ENCODE measurements at regions of chr12 and their contacts with region 1.

Region 1: DNA sequence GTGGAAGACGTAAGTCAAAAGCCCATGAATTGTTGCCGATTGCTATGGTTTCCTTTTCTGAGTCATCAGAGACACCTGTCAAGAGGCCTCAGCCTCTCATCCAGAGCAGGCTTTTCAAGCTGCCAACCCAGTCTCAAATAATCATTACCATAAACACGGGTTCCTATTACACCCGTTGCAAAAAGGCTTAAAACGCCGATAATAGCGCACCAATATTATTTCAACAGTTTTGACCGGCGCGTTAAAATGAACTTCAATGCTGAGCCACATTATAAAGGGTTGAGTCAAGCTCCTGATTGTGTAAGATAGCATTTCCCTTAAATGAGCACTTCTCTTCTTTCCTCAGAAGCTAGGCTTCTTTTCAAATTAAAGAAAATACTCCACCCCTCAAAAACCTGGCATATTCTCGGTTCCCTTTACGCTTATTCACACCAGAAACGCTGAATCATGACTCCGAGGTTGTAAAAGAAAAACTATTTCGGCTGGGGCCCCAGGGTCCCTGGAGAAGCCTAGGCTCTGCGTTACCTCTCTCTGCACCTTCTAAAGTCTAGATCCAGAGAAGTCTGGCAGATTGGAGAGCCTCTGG is 1.4 kb downstream of the TMTC1 start:
- DNase-seq: no peak
- ATAC-seq: peak; percentile 39 to 49 (median 46)
- H3K4me3 ChIP-seq: peak overlapping the region; percentile 52 to 97 (median 84)
- H3K27ac ChIP-seq: peak overlapping the region; percentile 69 to 94 (median 89)
- H3K4me1 ChIP-seq: peaks cover 0 to 52% (median 12%) of the 10 kb centered on the region in 12 donors
- H3K27me3 ChIP-seq: peaks cover 0 to 12% (median 0%) of the 10 kb centered on the region in 9 donors
- CTCF ChIP-seq: no peak
- POLR2A ChIP-seq: no peak

Region 2: DNA sequence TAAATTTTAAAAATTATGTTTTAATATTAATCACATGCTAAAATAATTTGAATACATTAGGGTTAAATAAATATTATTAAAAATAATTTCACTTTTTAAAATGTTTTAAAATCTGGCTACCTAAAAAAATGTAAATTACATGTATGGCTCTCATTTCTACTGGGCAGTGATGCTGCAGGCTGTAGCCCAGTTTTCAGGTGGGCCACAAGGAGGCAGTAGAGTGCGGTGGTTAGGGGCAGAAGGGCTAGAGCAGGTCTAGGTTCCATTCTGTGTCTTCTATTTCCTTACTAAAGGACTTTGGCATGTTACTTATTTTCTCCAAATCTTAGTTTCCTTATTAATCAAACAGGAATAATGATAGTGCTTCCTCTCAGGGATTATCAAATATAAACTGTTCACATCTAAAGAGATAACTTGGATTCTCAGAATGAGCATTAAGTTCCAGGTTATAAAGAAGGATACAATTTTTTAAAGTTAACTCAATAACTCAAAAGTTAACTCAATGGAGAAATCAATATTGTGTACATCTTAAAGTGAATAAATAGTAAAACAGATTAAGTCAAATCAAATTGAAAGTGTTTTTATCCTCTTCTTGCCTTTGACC is 230.0 kb before region 1 on chr12:
- intact Hi-C with region 1: loop called in 8 of 10 experiments (anchors 5 to 10 kb)
- DNase-seq: peak; percentile 53 to 80 (median 75)
- ATAC-seq: peak; percentile 78 to 95 (median 92)
- H3K4me3 ChIP-seq: no peak overlapping the region
- H3K27ac ChIP-seq: peak overlapping the region in 6 of 12 donors; percentile 1 to 54 (median 22)
- H3K4me1 ChIP-seq: peaks cover 0 to 20% (median 8%) of the 10 kb centered on the region in 12 donors
- H3K27me3 ChIP-seq: no peaks in the 10 kb centered on the region
- CTCF ChIP-seq: peak; percentile 85 to 96 (median 91)
- POLR2A ChIP-seq: no peak

Region 3: DNA sequence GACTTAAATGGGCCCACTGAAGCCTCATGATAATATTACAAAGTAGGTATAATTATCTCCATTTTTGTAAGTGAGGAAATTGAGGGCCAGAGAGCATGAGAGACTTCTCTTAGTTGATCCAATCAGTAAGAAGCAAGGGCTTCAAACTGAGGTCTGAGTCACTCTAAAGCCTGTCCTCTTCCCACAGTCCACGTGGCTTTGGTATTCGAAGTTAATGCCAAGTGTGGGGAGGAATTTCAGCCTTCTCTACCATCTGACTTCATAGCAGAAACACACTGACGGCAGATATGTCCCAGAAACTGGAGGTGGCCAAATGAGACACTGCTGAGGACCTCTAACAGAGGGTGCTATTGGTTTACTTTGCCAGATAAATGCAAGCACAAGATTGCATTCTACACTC is 170.5 kb before region 1 on chr12:
- intact Hi-C with region 1: loop called in 1 of 10 experiments (anchors 5 kb)
- DNase-seq: no peak
- ATAC-seq: peak; percentile 41 to 80 (median 75)
- H3K4me3 ChIP-seq: no peak overlapping the region
- H3K27ac ChIP-seq: no peak overlapping the region
- H3K4me1 ChIP-seq: peaks cover 0 to 41% (median 19%) of the 10 kb centered on the region in 12 donors
- H3K27me3 ChIP-seq: no peaks in the 10 kb centered on the region
- CTCF ChIP-seq: peak in 2 of 12 donors; percentile 11 to 15
- POLR2A ChIP-seq: no peak

Region 4: DNA sequence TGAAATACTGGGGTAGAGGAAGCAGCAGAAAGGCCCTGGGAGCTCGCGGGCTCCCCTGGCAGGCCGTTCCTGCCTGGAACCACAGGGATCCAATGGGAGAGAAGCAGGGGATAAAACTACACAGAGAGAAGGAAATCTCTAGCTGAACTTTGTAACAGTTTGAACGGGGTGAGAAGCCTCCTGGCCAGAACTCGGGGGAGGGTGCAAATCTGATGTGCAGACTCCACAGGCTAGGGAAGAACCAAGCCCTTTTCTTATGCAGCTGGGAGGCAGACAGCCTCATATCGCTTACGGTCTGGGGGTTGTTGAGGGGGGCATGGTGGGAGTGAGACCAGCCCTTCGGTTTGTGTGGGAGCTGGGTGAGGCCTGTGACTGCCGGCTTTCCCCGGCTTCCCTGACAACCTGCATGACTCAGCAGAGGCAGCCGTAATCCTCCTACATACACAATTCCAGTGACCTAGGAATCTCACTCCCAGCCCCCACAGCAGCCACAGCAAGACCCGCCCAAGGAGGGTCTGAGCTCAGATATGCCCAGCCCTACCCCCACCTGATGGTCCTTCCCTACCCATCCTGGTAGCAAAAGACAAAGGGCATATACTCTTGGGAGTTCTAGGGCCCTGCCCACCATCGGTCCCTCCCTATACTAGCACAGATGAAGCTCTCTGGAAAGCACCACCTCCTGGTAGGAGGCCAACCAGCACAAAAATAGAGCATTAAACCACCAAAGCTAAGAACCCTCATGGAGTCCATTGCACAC is 141.6 kb before region 1 on chr12:
- intact Hi-C with region 1: loop called in 2 of 10 experiments (anchors 10 kb)
- DNase-seq: peak; percentile 45 to 67 (median 63)
- ATAC-seq: peak; percentile 23 to 69 (median 56)
- H3K4me3 ChIP-seq: peak overlapping the region in 3 of 12 donors; percentile 1 to 33 (median 6)
- H3K27ac ChIP-seq: peak overlapping the region in 11 of 12 donors; percentile 47 to 82 (median 69)
- H3K4me1 ChIP-seq: peaks cover 0 to 26% (median 13%) of the 10 kb centered on the region in 12 donors
- H3K27me3 ChIP-seq: no peaks in the 10 kb centered on the region
- CTCF ChIP-seq: peak in 3 of 12 donors; percentile 10 to 42 (median 19)
- POLR2A ChIP-seq: no peak

Region 5: GRCh38 chr12:29673346-29673745 is 109.0 kb before region 1 on chr12:
- intact Hi-C with region 1: loop called in 3 of 10 experiments (anchors 5 to 10 kb)
- DNase-seq: no peak
- ATAC-seq: no peak
- H3K4me3 ChIP-seq: no peak overlapping the region
- H3K27ac ChIP-seq: no peak overlapping the region
- H3K4me1 ChIP-seq: peaks cover 0 to 30% (median 5%) of the 10 kb centered on the region in 12 donors
- H3K27me3 ChIP-seq: no peaks in the 10 kb centered on the region
- CTCF ChIP-seq: no peak
- POLR2A ChIP-seq: no peak

Region 6: GRCh38 chr12:29741342-29742241 is 40.8 kb before region 1 on chr12:
- intact Hi-C with region 1: loop called in 1 of 10 experiments (anchors 5 kb)
- DNase-seq: no peak
- ATAC-seq: peak; percentile 49 to 84 (median 79)
- H3K4me3 ChIP-seq: peak overlapping the region in 1 of 12 donors; percentile 20
- H3K27ac ChIP-seq: peak overlapping the region; percentile 51 to 82 (median 70)
- H3K4me1 ChIP-seq: peaks cover 0 to 73% (median 44%) of the 10 kb centered on the region in 12 donors
- H3K27me3 ChIP-seq: no peaks in the 10 kb centered on the region
- CTCF ChIP-seq: no peak
- POLR2A ChIP-seq: peak in 1 of 2 donors; percentile 10

Region 7: DNA sequence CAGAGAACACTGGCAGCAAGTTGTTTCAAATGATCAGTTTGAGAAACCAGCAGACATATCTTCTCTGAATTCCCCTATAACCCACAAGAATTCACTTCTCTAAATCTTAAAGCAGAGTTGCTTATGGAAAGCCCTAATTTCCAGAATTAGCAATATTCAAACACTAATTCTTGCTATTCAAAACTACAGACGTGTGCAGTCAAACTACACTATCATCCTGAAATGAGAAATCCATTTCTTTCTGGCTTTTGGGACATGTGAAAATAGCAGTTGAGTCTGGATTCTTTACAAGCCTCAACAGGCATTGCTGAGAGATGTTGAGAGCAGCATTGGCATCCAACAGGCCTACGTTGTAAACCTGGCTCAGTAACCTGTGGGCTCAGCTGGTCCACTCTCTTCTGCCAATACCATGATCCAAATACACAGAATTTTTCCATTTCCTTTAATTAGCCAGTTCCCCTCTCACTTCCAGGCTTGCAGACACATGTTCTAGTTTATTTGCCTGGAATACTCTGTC is 76.0 kb after region 1 on chr12:
- intact Hi-C with region 1: no loop called
- DNase-seq: peak in 1 of 5 donors; percentile 21
- ATAC-seq: peak; percentile 22 to 52 (median 34)
- H3K4me3 ChIP-seq: no peak overlapping the region
- H3K27ac ChIP-seq: no peak overlapping the region
- H3K4me1 ChIP-seq: peaks cover 0 to 13% (median 0%) of the 10 kb centered on the region in 12 donors
- H3K27me3 ChIP-seq: no peaks in the 10 kb centered on the region
- CTCF ChIP-seq: no peak
- POLR2A ChIP-seq: no peak

Region 8: GRCh38 chr12:29889737-29890136 is 107.4 kb after region 1 on chr12:
- intact Hi-C with region 1: loop called in 5 of 10 experiments (anchors 10 kb)
- DNase-seq: peak in 4 of 5 donors; percentile 52 to 71 (median 58)
- ATAC-seq: peak in 3 of 4 donors; percentile 36 to 57 (median 56)
- H3K4me3 ChIP-seq: no peak overlapping the region
- H3K27ac ChIP-seq: no peak overlapping the region
- H3K4me1 ChIP-seq: no peaks in the 10 kb centered on the region
- H3K27me3 ChIP-seq: no peaks in the 10 kb centered on the region
- CTCF ChIP-seq: peak; percentile 44 to 71 (median 59)
- POLR2A ChIP-seq: no peak